Natural killer cell (primary cell): ENCODE measurements at regions of chr9 and their contacts with region 1.

Region 1: DNA sequence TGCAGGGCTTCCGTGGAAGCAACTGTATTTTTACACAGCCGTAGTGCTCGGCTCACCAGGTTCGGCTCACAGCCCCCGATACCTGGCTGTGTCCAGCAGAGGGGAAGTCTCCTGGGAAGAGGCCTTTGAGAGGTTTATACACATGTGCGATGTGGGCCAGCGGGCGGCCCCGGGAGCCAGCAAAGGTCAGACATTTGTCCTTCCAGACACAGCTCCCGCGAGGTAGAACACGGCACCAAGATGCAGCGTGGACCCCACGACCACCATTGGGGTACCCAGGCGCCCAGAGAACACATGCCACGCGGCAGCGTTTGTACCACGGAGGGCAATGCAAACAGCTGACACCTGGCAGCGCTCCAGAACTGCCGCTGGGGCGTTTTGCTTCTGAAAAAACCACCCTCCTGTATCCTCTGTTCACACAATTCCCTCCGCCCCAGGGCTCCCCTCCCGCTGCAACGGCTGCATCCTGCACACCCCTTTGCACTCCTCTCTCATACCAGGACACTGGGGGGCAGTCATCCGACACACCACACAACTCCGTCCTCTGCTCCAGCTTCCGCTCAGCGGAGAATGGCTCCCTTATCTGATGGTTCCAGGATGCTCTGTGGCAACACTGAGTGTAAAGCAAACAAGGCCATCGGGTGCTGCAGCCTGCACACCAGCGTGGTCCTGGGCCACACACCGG is 235.3 kb downstream of the SYK start:
- DNase-seq: peak; percentile 36 to 75
- ATAC-seq: peak; percentile 78 to 86 (median 82)
- H3K4me3 ChIP-seq: no peak overlapping the region
- H3K4me3 Mint-ChIP-seq: peak overlapping the region; percentile 69
- H3K27ac ChIP-seq: no peak overlapping the region
- H3K27ac Mint-ChIP-seq: peak overlapping the region in 1 of 2 donors; percentile 71
- H3K4me1 ChIP-seq: peaks cover 23% of the 10 kb centered on the region
- H3K4me1 Mint-ChIP-seq: peaks cover 37 to 47% of the 10 kb centered on the region in 2 donors
- H3K27me3 ChIP-seq: no peaks in the 10 kb centered on the region
- H3K27me3 Mint-ChIP-seq: peaks cover 0 to 4% of the 10 kb centered on the region in 2 donors
- CTCF ChIP-seq: peak; percentile 53

Region 2: DNA sequence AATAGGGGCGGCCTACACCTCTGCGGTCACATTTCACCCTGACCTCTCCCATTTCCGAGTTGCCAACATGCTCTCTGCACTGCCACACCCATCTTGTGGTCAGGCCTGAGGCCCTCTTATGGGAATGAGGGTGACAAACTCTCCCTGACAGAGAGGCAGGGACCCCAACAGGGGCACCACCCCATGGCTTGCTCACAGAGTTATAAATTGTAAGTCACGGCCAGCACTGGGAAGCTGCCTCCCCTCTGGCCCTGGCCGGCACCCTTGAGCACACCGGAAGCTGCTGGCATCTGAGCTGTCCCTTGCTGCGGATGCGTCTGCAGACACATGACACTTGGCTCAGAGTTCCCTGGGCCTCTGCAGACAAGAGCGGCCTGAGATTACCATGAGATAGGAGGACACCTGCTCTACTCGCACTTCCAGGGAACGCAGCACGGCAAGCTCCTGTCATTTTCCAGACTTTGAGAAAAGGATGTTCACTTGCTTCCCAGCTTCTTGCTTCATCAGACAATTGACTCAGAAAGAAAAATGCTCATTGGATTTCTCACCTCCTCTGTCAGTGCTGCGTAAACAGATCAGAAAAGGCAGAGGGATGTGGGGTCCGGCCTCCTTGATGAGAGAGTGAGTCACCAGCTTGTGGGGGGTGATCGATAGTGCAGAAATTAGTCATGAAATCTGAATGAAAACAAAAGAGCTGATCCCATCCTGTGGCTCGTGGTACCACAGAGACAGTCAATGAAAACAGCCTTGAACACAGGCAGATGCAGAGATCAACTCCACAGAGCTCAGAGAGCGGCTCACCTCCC is 34.4 kb after region 1 on chr9:
- intact Hi-C with region 1: no loop called
- DNase-seq: peak in 1 of 2 donors; percentile 24
- ATAC-seq: no peak
- H3K4me3 ChIP-seq: no peak overlapping the region
- H3K4me3 Mint-ChIP-seq: no peak overlapping the region
- H3K27ac ChIP-seq: no peak overlapping the region
- H3K27ac Mint-ChIP-seq: no peak overlapping the region
- H3K4me1 ChIP-seq: peaks cover 13% of the 10 kb centered on the region
- H3K4me1 Mint-ChIP-seq: peaks cover 0 to 7% of the 10 kb centered on the region in 2 donors
- H3K27me3 ChIP-seq: no peaks in the 10 kb centered on the region
- H3K27me3 Mint-ChIP-seq: peaks cover 0 to 3% of the 10 kb centered on the region in 2 donors
- CTCF ChIP-seq: no peak

Region 3: DNA sequence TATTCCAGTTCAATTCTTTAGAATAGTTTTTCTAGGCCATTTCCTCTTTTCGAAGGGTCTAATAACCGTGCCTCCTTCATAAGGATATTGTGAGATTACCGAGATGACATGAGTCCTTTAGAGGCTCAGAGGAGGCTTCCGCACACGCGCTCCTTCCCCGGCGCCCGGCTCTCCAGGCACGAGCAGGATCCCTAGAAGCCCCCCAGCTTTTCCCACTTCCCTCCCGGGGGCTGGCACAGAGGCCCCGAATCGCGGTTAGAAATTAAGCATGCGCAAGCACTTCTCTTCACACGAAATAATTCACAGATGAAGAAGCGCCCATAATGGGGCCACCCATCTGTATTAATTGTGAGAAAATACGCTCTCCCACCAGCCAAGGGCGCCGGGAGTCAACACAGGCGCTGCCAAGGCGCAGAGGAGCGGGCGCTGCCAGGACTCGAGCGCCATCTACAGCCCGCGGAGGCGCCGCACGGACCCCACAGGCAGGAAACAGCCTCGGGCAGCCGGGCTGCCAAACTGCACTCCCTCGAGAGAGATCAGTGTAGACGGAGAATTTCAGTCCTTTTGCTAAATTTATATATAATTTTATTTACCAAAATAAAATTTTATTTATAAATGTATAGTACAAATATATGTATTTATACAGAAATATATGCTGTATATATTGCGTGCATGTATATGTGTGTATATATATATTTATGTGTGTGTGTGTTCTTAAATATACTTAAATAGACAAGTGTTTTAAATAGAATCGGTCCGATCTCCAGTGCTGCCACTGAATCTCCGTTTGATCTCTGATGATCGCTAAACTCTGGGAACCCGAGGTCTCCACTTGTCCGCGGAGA is 644.7 kb after region 1 on chr9:
- intact Hi-C with region 1: loop called (anchors 2 kb)
- DNase-seq: peak; percentile 69 to 70
- ATAC-seq: peak; percentile 90 to 100 (median 99)
- H3K4me3 ChIP-seq: no peak overlapping the region
- H3K4me3 Mint-ChIP-seq: peak overlapping the region; percentile 71
- H3K27ac ChIP-seq: no peak overlapping the region
- H3K27ac Mint-ChIP-seq: no peak overlapping the region
- H3K4me1 ChIP-seq: peaks cover 7% of the 10 kb centered on the region
- H3K4me1 Mint-ChIP-seq: peaks cover 4% of the 10 kb centered on the region in 2 donors
- H3K27me3 ChIP-seq: no peaks in the 10 kb centered on the region
- H3K27me3 Mint-ChIP-seq: peaks cover 0 to 21% of the 10 kb centered on the region in 2 donors
- CTCF ChIP-seq: peak; percentile 95

Region 4: DNA sequence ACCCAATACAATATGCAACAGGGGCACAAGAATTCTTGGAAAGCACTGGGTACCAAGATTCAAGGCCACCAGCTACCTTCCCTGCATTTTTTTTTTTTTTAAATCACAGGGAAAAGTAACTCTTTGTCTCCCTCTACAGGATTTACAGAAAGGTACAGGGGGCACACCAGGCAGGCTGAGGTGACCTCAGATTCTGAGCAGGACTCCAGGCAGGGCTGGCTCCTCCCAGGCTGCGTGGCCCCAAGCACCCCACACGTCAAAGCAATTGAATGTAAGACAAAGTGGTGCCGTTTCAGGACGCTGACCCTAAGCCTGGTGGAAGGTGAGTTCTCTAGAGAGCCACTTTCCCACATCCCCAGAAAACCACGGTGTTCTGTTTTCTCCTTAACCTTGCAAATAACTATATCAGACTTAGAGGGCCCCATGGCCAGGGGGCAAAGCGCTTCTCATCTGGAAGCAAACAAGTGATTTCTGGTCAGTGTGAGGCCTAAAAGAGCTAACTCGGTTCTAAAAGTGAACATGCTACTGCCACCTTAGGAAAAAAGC is 690.4 kb after region 1 on chr9:
- intact Hi-C with region 1: loop called (anchors 5 kb)
- DNase-seq: peak in 1 of 2 donors; percentile 58
- ATAC-seq: peak in 2 of 3 donors; percentile 73 to 85
- H3K4me3 ChIP-seq: no peak overlapping the region
- H3K4me3 Mint-ChIP-seq: no peak overlapping the region
- H3K27ac ChIP-seq: no peak overlapping the region
- H3K27ac Mint-ChIP-seq: no peak overlapping the region
- H3K4me1 ChIP-seq: no peaks in the 10 kb centered on the region
- H3K4me1 Mint-ChIP-seq: no peaks in the 10 kb centered on the region
- H3K27me3 ChIP-seq: no peaks in the 10 kb centered on the region
- H3K27me3 Mint-ChIP-seq: no peaks in the 10 kb centered on the region
- CTCF ChIP-seq: peak; percentile 65